ENCODE measurements at regions of chr9 and their contacts with region 1.

Region 1: GRCh38 chr9:34072868-34073590 is 24.3 kb upstream of the UBAP2 start:
- DNase-seq: peak; percentile 70
- ATAC-seq: peak; percentile 94 to 96
- H3K4me3 ChIP-seq: no peak overlapping the region
- H3K27ac ChIP-seq: peak overlapping the region; percentile 83 to 93 (median 86)
- H3K4me1 ChIP-seq: peaks cover 27 to 30% of the 10 kb centered on the region in 2 donors
- H3K27me3 ChIP-seq: no peaks in the 10 kb centered on the region
- CTCF ChIP-seq: no peak
- POLR2A ChIP-seq: no peak

Region 2: GRCh38 chr9:33816327-33817252 is 256.4 kb before region 1 on chr9 and contains the start of gene UBE2R2:
- in situ Hi-C with region 1: no loop called
- intact Hi-C with region 1: loop called (anchors 5 kb)
- DNase-seq: peak; percentile 87 to 91
- ATAC-seq: peak; percentile 65 to 76
- H3K4me3 ChIP-seq: peak within 1 kb of the TSS; percentile 80 to 94 (median 90)
- H3K27ac ChIP-seq: peak within 1 kb of the TSS; percentile 92 to 100 (median 98)
- H3K4me1 ChIP-seq: peaks cover 45 to 52% of the 10 kb centered on the region in 2 donors
- H3K27me3 ChIP-seq: no peaks in the 10 kb centered on the region
- CTCF ChIP-seq: no peak
- POLR2A ChIP-seq: peak; percentile 75 to 79
- total RNA-seq, gene UBE2R2: 32.5 to 47.3 (median 41.9) TPM

Region 3: DNA sequence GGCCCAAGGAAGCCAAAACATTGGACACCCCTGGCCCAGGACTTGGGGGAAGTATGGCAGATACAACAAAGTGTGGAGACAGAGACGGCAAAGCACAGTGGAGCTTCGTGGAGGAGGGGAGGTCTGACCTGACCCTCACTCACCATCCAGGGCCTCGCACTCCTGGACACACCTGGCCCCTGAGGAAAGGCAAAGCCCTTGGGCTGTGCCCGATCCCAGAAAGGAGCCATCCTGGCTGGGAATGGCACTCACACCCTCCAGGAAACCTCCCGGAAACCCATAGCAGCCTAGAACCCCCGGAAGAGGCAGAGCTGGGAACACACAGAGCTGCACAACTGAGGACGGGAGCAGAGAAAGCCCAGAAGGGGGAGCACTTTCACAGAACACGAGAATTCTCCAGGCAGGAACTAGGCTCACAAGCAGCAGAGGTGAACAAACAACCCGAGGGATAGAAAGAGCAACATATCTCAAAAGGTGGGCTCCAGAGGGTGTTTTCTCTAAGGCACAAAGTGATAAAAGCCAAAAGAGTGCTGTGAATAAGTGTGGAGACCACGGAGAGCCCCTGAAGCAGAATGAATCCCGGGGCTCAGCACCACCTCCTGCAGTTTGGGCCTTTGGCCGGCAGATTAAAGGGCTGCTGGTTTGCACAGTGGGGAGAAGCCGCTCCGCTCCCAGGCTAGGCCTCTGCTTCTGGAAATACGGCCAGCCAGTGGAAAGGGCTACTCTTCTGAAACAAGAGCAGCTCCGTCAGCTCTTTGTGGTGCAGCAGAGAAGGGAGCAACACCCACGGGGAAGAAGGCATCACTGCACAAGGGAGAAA is 147.8 kb before region 1 on chr9:
- in situ Hi-C with region 1: loop called in 1 of 4 experiments (anchors 25 kb)
- intact Hi-C with region 1: loop called (anchors 1 kb)
- DNase-seq: peak in 1 of 2 donors; percentile 57
- ATAC-seq: peak; percentile 38 to 65
- H3K4me3 ChIP-seq: no peak overlapping the region
- H3K27ac ChIP-seq: peak overlapping the region; percentile 47 to 70 (median 60)
- H3K4me1 ChIP-seq: peaks cover 7 to 19% of the 10 kb centered on the region in 2 donors
- H3K27me3 ChIP-seq: no peaks in the 10 kb centered on the region
- CTCF ChIP-seq: peak; percentile 30 to 71 (median 49)
- POLR2A ChIP-seq: no peak

Region 4: GRCh38 chr9:34010979-34011378 is 62.0 kb before region 1 on chr9:
- in situ Hi-C with region 1: no loop called
- intact Hi-C with region 1: loop called (anchors 2 kb)
- DNase-seq: no peak
- ATAC-seq: no peak
- H3K4me3 ChIP-seq: no peak overlapping the region
- H3K27ac ChIP-seq: no peak overlapping the region
- H3K4me1 ChIP-seq: peaks cover 0 to 4% of the 10 kb centered on the region in 2 donors
- H3K27me3 ChIP-seq: no peaks in the 10 kb centered on the region
- CTCF ChIP-seq: peak in 3 of 5 experiments; percentile 21 to 35 (median 30)
- POLR2A ChIP-seq: no peak

Region 5: GRCh38 chr9:34025062-34025461 is 48.0 kb before region 1 on chr9:
- in situ Hi-C with region 1: no loop called
- intact Hi-C with region 1: loop called (anchors 5 kb)
- DNase-seq: no peak
- ATAC-seq: peak; percentile 76 to 87
- H3K4me3 ChIP-seq: no peak overlapping the region
- H3K27ac ChIP-seq: peak overlapping the region; percentile 68 to 84 (median 75)
- H3K4me1 ChIP-seq: peaks cover 45 to 50% of the 10 kb centered on the region in 2 donors
- H3K27me3 ChIP-seq: no peaks in the 10 kb centered on the region
- CTCF ChIP-seq: no peak
- POLR2A ChIP-seq: no peak

Region 6: GRCh38 chr9:34048923-34049697 is 23.9 kb before region 1 on chr9:
- in situ Hi-C with region 1: no loop called
- intact Hi-C with region 1: loop called (anchors 1 kb)
- DNase-seq: peak; percentile 96 to 97
- ATAC-seq: peak; percentile 95 to 96
- H3K4me3 ChIP-seq: peak overlapping the region; percentile 74 to 90 (median 85)
- H3K27ac ChIP-seq: peak overlapping the region; percentile 90 to 97 (median 94)
- H3K4me1 ChIP-seq: peaks cover 19 to 22% of the 10 kb centered on the region in 2 donors
- H3K27me3 ChIP-seq: no peaks in the 10 kb centered on the region
- CTCF ChIP-seq: peak in 3 of 5 experiments; percentile 9 to 55 (median 32)
- POLR2A ChIP-seq: peak in 1 of 2 donors; percentile 8